ENCODE measurements at regions of chr20 and their contacts with region 1.

Region 1: DNA sequence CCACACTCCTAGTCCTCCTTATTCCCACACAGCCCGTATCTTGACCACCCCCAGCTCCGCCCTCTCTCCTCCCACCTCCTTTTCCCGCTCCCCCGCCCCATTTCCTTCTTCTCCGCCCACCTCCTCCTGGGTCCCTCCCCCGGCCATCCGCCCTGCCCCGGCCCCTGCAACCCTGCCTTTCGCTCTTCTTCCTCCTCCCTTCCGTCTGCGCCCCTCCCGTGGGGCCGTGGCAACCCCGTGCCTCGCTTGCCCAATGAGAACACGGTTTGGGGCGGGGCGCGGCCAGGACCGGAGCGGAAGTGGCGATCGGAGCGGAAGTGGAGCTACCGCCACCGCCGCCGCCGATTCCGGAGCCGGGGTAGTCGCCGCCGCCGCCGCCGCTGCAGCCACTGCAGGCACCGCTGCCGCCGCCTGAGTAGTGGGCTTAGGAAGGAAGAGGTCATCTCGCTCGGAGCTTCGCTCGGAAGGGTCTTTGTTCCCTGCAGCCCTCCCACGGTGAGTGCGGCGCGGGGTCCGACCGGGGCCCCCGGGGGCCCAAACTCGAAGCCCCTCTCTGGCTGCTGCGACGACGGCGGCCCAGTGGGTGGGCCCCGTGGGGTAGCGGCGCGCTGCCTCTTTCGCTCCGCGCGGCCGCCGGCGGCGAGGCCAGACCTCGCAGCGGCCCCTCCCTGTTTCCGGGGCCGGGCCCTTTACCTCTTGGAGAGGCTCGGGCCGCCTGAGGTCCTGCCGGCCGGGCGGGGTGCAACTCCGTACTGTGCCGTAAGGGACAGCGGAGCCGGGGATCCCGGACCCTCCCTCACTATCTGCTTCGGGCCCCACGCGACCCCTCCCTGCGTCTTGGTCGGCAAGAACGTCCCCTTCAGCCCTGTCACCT is at the start of gene YWHAB:
- DNase-seq: peak; percentile 95
- ATAC-seq: peak; percentile 99
- H3K4me3 ChIP-seq: peak within 1 kb of the TSS; percentile 79
- H3K27ac ChIP-seq: peak within 1 kb of the TSS; percentile 95
- H3K4me1 ChIP-seq: peaks cover 2% of the 10 kb centered on the region
- H3K27me3 ChIP-seq: no peaks in the 10 kb centered on the region
- CTCF ChIP-seq: no peak
- POLR2A ChIP-seq: peak; percentile 78
- RAD21 ChIP-seq: no peak
- total RNA-seq, gene YWHAB: 78.0 and 120 TPM in 2 replicates

Region 2: GRCh38 chr20:44210422-44211176 is 675.0 kb before region 1 on chr20 and contains the start of gene OSER1:
- CTCF ChIA-PET with region 1: no interaction called
- POLR2A ChIA-PET with region 1: no interaction called
- dilution Hi-C with region 1: no loop called
- in situ Hi-C with region 1: no loop called
- intact Hi-C with region 1: loop called (anchors 10 kb)
- DNase-seq: peak; percentile 95
- ATAC-seq: peak; percentile 90
- H3K4me3 ChIP-seq: peak within 1 kb of the TSS; percentile 77
- H3K27ac ChIP-seq: peak within 1 kb of the TSS; percentile 75
- H3K4me1 ChIP-seq: peaks cover 4% of the 10 kb centered on the region; the same call in 1 of the 2 replicates
- H3K27me3 ChIP-seq: no peaks in the 10 kb centered on the region
- CTCF ChIP-seq: no peak
- POLR2A ChIP-seq: peak; percentile 92
- RAD21 ChIP-seq: no peak
- total RNA-seq, gene OSER1: 66.9 and 70.6 TPM in 2 replicates

Region 3: DNA sequence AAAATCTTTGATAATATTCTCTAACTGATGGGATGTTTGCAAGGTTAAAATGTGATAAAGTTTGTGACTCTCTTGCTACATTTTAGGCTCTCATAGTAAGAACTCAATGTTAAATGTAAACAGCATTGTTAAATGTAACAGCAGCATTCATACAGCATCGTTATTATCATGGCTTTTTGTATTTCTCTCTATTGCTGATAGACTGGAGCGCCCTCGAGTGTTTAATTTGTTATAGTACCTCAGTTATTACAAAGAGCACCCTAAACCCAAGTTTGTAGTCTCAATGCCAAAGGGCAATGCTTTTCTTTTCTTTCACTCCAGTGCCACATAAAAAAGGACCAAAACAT is 424.9 kb before region 1 on chr20:
- CTCF ChIA-PET with region 1: no interaction called
- POLR2A ChIA-PET with region 1: no interaction called
- dilution Hi-C with region 1: no loop called
- in situ Hi-C with region 1: no loop called
- intact Hi-C with region 1: no loop called
- DNase-seq: peak; percentile 23
- ATAC-seq: peak; percentile 76
- H3K4me3 ChIP-seq: no peak overlapping the region
- H3K27ac ChIP-seq: no peak overlapping the region
- H3K4me1 ChIP-seq: no peaks in the 10 kb centered on the region
- H3K27me3 ChIP-seq: peaks cover 14% of the 10 kb centered on the region
- CTCF ChIP-seq: peak; percentile 57
- POLR2A ChIP-seq: no peak
- RAD21 ChIP-seq: peak; percentile 60

Region 4: GRCh38 chr20:44956410-44956809 is 70.8 kb after region 1 on chr20:
- CTCF ChIA-PET with region 1: no interaction called
- POLR2A ChIA-PET with region 1: no interaction called
- dilution Hi-C with region 1: no loop called
- in situ Hi-C with region 1: no loop called
- intact Hi-C with region 1: no loop called
- DNase-seq: no peak
- ATAC-seq: no peak
- H3K4me3 ChIP-seq: no peak overlapping the region
- H3K27ac ChIP-seq: no peak overlapping the region
- H3K4me1 ChIP-seq: peaks cover 5% of the 10 kb centered on the region
- H3K27me3 ChIP-seq: no peaks in the 10 kb centered on the region
- CTCF ChIP-seq: no peak
- POLR2A ChIP-seq: no peak
- RAD21 ChIP-seq: no peak